K562 (cell line): ENCODE measurements at regions of chr14 and their contacts with region 1.

Region 1: GRCh38 chr14:21203470-21204166 is 47.8 kb upstream of the OR5AU1 start:
- DNase-seq: no peak
- ATAC-seq: peak; percentile 15
- H3K4me3 ChIP-seq: no peak overlapping the region
- H3K27ac ChIP-seq: no peak overlapping the region
- H3K4me1 ChIP-seq: no peaks in the 10 kb centered on the region
- H3K27me3 ChIP-seq: no peaks in the 10 kb centered on the region
- CTCF ChIP-seq: no peak
- EP300 ChIP-seq: no peak
- POLR2A ChIP-seq: peak; percentile 40; the same call in 1 of the 2 replicates
- RAD21 ChIP-seq: no peak

Region 2: DNA sequence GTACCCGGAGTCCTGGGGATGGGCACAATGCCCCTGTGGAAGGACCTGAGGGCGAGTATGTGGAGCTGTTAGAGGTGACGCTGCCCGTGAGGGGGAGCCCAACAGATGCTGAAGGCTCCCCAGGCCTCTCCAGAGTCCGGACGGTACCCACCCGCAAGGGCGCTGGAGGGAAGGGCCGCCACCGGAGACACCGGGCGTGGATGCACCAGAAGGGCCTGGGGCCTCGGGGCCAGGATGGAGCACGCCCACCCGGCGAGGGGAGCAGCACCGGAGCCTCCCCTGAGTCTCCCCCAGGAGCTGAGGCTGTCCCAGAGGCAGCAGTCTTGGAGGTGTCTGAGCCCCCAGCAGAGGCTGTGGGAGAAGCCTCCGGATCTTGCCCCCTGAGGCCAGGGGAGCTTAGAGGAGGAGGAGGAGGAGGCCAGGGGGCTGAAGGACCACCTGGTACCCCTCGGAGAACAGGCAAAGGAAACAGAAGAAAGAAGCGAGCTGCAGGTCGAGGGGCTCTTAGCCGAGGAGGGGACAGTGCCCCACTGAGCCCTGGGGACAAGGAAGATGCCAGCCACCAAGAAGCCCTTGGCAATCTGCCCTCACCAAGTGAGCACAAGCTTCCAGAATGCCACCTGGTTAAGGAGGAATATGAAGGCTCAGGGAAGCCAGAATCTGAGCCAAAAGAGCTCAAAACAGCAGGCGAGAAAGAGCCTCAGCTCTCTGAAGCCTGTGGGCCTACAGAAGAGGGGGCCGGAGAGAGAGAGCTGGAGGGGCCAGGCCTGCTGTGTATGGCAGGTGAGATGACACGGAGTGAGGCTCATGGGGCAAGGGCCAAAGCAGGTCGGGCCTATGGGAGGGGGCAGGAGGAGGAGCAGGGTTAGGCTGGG is 129.0 kb before region 1 on chr14:
- CTCF ChIA-PET with region 1: no interaction called
- POLR2A ChIA-PET with region 1: no interaction called
- in situ Hi-C with region 1: no loop called
- intact Hi-C with region 1: no loop called
- DNase-seq: no peak
- ATAC-seq: no peak
- H3K4me3 ChIP-seq: no peak overlapping the region
- H3K27ac ChIP-seq: no peak overlapping the region
- H3K4me1 ChIP-seq: peaks cover 0 to 30% of the 10 kb centered on the region in 2 experiments; a peak in 3 of 5 replicates
- H3K27me3 ChIP-seq: no peaks in the 10 kb centered on the region
- CTCF ChIP-seq: no peak
- EP300 ChIP-seq: no peak
- POLR2A ChIP-seq: no peak
- RAD21 ChIP-seq: no peak

Region 3: DNA sequence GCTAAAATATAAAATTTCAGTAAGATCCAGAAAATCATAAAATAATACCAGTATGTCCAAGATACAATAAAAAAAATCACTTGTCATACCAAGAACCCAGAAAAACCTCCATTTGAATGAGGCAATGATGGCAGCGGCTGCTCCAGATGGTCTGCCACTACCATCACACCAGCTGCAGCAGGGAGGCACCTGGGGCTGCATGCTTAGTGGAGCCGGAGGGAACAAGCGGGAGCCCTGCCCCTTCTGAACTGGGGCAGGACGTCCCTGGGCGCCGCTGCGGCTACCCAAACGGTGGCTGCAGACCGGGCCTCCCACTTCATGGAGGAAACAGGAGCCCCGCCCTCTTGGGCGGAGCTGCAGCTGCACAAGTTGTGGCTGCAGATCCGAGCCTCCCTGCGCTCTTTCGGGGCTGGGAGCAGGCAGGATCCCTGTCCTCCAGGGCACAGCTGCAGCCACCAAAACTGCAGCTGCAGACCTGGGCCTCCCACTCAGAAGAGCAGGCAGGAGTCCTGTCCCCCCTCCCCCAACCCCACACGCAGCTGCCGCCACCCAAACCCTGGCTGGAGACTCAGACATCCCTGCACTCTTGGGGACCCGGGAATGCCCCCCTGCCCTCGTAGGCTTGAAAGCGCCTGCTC is 11.7 kb before region 1 on chr14:
- CTCF ChIA-PET with region 1: no interaction called
- POLR2A ChIA-PET with region 1: interaction called, 20 read pairs
- in situ Hi-C with region 1: no loop called
- intact Hi-C with region 1: no loop called
- DNase-seq: peak; percentile 35 to 79 (median 48)
- ATAC-seq: peak; percentile 99
- H3K4me3 ChIP-seq: peak overlapping the region; percentile 21
- H3K27ac ChIP-seq: no peak overlapping the region
- H3K4me1 ChIP-seq: peaks cover 4 to 14% of the 10 kb centered on the region in 2 experiments; a peak in 3 of 5 replicates
- H3K27me3 ChIP-seq: no peaks in the 10 kb centered on the region
- CTCF ChIP-seq: no peak
- EP300 ChIP-seq: no peak
- POLR2A ChIP-seq: no peak
- RAD21 ChIP-seq: no peak